ENCODE measurements at regions of chr9 and their contacts with region 1.

Region 1: DNA sequence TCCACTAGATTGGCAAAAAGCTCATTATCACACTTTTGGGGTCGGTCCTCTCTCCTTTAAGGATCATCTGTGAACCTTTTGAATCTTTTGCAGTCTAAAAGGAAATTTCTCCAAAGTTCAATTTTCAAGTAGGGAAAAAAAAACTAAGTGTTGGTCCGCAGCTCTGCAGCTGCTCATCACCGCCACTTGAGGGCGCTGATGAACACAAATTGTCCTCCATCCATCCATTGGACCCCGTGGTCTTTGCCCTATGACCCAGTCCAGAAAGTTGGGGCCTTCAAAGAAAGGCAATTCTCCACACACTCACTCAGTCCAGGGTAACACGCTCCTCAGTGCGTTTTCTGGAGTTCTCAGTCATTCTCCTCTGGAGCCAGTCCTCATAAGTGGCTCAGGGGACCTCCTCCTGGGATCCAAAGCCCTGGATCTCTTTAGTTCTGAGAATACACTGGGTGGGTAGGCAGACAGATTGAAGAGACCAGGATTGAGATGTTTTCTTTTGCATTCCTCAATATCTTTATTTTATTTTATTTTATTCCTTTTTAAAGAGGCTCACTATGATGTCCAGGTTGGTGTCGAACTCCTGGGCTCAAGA is 63.6 kb upstream of the SLC28A3 start:
- DNase-seq: no peak
- ATAC-seq: no peak
- H3K4me3 ChIP-seq: no peak overlapping the region
- H3K4me1 ChIP-seq: no peaks in the 10 kb centered on the region
- CTCF ChIP-seq: no peak

Region 2: GRCh38 chr9:85600675-85601263 is 1196.6 kb after region 1 on chr9:
- intact Hi-C with region 1: loop called (anchors 10 kb)
- DNase-seq: no peak
- ATAC-seq: peak; percentile 48
- H3K4me3 ChIP-seq: no peak overlapping the region
- H3K4me1 ChIP-seq: no peaks in the 10 kb centered on the region
- CTCF ChIP-seq: no peak

Measured in mucosa of descending colon (tissue), 3 donors.